Naive thymus-derived CD4-positive, alpha-beta T cell (primary cell): ENCODE measurements at regions of chr6 and their contacts with region 1.

Region 1: DNA sequence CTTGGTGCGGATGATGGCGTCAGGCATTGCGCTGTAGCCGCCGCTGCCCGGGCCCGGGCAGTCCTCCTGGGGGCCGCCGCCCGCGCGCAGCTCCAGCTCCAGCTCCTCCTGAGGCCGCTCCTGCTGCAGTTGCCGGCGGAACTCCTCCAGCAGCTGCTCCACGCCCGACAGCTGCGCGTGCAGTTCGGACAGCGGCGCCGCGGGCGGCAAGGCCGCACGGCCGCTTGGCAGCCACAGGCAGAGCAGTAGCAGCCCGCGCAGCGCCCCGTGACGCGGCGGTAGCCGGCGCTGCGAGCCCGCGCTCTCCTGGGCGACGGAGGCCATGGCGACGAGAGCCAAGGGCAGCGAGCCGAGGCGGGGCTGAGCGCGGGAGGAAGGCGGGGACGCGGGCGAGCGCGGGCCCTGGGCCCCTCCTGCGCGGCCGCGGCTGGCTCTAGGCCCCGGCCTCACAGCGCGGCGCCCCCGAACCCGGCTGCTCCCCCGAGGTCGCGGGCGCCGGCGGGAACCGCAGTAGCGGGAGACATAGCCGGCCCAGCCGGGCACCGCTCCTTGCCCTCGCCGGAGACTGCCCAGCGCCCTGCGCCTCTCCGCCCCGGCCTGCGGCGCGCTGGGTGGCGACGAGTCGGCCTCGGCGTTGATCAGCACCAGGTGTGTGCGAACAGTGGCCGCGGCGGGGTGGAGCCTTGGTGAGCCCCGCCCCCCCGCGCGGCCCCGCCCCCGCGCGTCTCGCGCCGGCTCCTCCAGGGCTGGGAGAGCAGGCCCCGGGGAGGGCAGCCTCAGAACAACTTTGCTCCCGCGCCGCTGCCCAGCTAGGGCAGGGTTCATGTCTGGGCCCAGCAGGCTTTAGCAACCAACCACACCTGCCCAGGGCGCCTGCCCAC is at the start of gene LRP11:
- DNase-seq: peak; percentile 73 to 90 (median 83)
- ATAC-seq: peak; percentile 93
- H3K4me3 ChIP-seq: peak within 1 kb of the TSS; percentile 63
- H3K4me3 Mint-ChIP-seq: peak within 1 kb of the TSS; percentile 80 to 88 (median 82)
- H3K27ac ChIP-seq: peak within 1 kb of the TSS; percentile 62
- H3K27ac Mint-ChIP-seq: peak within 1 kb of the TSS in 6 of 9 donors; percentile 24 to 82 (median 48)
- H3K4me1 ChIP-seq: peaks cover 6 to 10% of the 10 kb centered on the region in 2 donors
- H3K4me1 Mint-ChIP-seq: peaks cover 0 to 21% (median 10%) of the 10 kb centered on the region in 7 donors
- H3K27me3 ChIP-seq: no peaks in the 10 kb centered on the region
- H3K27me3 Mint-ChIP-seq: peaks cover 0 to 41% (median 8%) of the 10 kb centered on the region in 5 donors
- total RNA-seq, gene LRP11: 0.88 to 3.7 (median 2.8) TPM

Region 2: GRCh38 chr6:149648148-149649145 is 215.5 kb before region 1 on chr6 and contains the start of gene KATNA1:
- CTCF ChIA-PET with region 1: no interaction called
- POLR2A ChIA-PET with region 1: no interaction called
- intact Hi-C with region 1: loop called (anchors 5 to 10 kb)
- DNase-seq: peak; percentile 69 to 95 (median 81)
- ATAC-seq: peak; percentile 96
- H3K4me3 ChIP-seq: peak within 1 kb of the TSS; percentile 91
- H3K4me3 Mint-ChIP-seq: peak within 1 kb of the TSS; percentile 83 to 96 (median 91)
- H3K27ac ChIP-seq: peak within 1 kb of the TSS; percentile 82
- H3K27ac Mint-ChIP-seq: peak within 1 kb of the TSS; percentile 82 to 95 (median 90)
- H3K4me1 ChIP-seq: peaks cover 7 to 17% of the 10 kb centered on the region in 2 donors
- H3K4me1 Mint-ChIP-seq: peaks cover 2 to 41% (median 33%) of the 10 kb centered on the region in 7 donors
- H3K27me3 ChIP-seq: no peaks in the 10 kb centered on the region
- H3K27me3 Mint-ChIP-seq: no peaks in the 10 kb centered on the region
- total RNA-seq, gene KATNA1: 14.1 to 22.6 (median 16.7) TPM

Region 3: GRCh38 chr6:149746147-149746946 is 117.6 kb before region 1 on chr6 and contains the start of gene NUP43:
- CTCF ChIA-PET with region 1: no interaction called
- POLR2A ChIA-PET with region 1: no interaction called
- intact Hi-C with region 1: loop called (anchors 1 kb)
- DNase-seq: peak; percentile 75 to 91 (median 90)
- ATAC-seq: peak; percentile 80
- H3K4me3 ChIP-seq: peak within 1 kb of the TSS; percentile 77
- H3K4me3 Mint-ChIP-seq: peak within 1 kb of the TSS; percentile 93 to 99 (median 97)
- H3K27ac ChIP-seq: peak within 1 kb of the TSS; percentile 82
- H3K27ac Mint-ChIP-seq: peak within 1 kb of the TSS; percentile 86 to 97 (median 95)
- H3K4me1 ChIP-seq: peaks cover 17 to 26% of the 10 kb centered on the region in 2 donors
- H3K4me1 Mint-ChIP-seq: peaks cover 14 to 46% (median 32%) of the 10 kb centered on the region in 7 donors
- H3K27me3 ChIP-seq: no peaks in the 10 kb centered on the region
- H3K27me3 Mint-ChIP-seq: no peaks in the 10 kb centered on the region
- total RNA-seq, gene NUP43: 14.0 to 70.7 (median 60.2) TPM

Region 4: DNA sequence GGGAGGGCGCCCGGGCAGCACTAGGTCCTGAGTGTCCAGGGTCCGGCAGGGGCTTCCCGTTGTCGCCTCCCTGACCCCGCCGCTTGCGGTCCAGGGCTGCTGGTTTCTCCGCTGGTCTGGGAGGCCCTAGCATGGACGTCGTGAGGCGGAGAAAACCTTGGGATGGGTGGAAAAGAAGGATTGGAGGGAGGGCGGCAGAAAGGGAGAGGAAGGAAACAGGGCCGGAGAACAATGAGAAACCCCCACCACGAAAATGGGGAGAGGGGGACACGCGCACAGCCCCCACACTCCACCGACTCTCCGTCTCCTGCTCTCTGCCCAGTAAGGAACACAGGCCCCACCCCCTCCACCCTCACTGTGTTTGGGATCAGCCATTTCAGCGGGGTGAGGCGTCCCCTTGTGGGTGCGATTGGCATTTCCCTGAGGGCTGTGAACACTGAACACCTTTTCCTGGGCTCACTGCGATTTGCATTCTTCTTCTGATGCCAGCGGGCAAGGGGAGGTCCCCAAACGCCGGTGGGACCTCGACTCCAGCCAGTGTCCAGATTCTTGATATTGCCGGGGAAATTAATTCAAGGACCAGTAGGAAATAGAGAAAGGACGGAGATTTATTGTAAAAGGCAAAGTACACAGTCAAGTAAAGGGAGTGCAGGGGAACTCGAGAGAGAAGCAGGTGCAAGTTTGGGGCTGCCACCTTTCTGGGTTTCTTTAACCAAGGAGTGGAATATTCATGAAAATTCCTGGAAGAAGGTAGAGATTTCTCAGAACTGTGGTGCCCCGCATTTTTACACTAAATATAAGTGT is 62.2 kb after region 1 on chr6:
- CTCF ChIA-PET with region 1: no interaction called
- POLR2A ChIA-PET with region 1: no interaction called
- intact Hi-C with region 1: loop called (anchors 1 kb)
- DNase-seq: peak; percentile 35 to 77 (median 56)
- ATAC-seq: peak; percentile 76
- H3K4me3 ChIP-seq: no peak overlapping the region
- H3K4me3 Mint-ChIP-seq: peak overlapping the region in 9 of 10 donors; percentile 12 to 73 (median 40)
- H3K27ac ChIP-seq: no peak overlapping the region
- H3K27ac Mint-ChIP-seq: peak overlapping the region in 1 of 9 donors; percentile 10
- H3K4me1 ChIP-seq: peaks cover 6 to 7% of the 10 kb centered on the region in 2 donors
- H3K4me1 Mint-ChIP-seq: peaks cover 18 to 30% (median 26%) of the 10 kb centered on the region in 7 donors
- H3K27me3 ChIP-seq: peaks cover 21 to 32% of the 10 kb centered on the region in 2 donors
- H3K27me3 Mint-ChIP-seq: peaks cover 85 to 93% (median 87%) of the 10 kb centered on the region in 5 donors

Region 5: GRCh38 chr6:149963462-149964307 is 99.7 kb after region 1 on chr6 and contains the start of gene ULBP1:
- CTCF ChIA-PET with region 1: no interaction called
- POLR2A ChIA-PET with region 1: no interaction called
- intact Hi-C with region 1: no loop called
- DNase-seq: peak; percentile 48 to 86 (median 58)
- ATAC-seq: peak; percentile 79
- H3K4me3 ChIP-seq: peak within 1 kb of the TSS; percentile 66
- H3K4me3 Mint-ChIP-seq: peak within 1 kb of the TSS; percentile 88 to 97 (median 92)
- H3K27ac ChIP-seq: no peak within 1 kb of the TSS
- H3K27ac Mint-ChIP-seq: peak within 1 kb of the TSS in 8 of 9 donors; percentile 15 to 92 (median 74)
- H3K4me1 ChIP-seq: peaks cover 8 to 24% of the 10 kb centered on the region in 2 donors
- H3K4me1 Mint-ChIP-seq: peaks cover 14 to 28% (median 23%) of the 10 kb centered on the region in 7 donors
- H3K27me3 ChIP-seq: peaks cover 12 to 36% of the 10 kb centered on the region in 2 donors
- H3K27me3 Mint-ChIP-seq: peaks cover 72 to 90% (median 87%) of the 10 kb centered on the region in 5 donors
- total RNA-seq, gene ULBP1: 1.4 TPM in 1 of 5 experiments, not detected in the others

Region 6: DNA sequence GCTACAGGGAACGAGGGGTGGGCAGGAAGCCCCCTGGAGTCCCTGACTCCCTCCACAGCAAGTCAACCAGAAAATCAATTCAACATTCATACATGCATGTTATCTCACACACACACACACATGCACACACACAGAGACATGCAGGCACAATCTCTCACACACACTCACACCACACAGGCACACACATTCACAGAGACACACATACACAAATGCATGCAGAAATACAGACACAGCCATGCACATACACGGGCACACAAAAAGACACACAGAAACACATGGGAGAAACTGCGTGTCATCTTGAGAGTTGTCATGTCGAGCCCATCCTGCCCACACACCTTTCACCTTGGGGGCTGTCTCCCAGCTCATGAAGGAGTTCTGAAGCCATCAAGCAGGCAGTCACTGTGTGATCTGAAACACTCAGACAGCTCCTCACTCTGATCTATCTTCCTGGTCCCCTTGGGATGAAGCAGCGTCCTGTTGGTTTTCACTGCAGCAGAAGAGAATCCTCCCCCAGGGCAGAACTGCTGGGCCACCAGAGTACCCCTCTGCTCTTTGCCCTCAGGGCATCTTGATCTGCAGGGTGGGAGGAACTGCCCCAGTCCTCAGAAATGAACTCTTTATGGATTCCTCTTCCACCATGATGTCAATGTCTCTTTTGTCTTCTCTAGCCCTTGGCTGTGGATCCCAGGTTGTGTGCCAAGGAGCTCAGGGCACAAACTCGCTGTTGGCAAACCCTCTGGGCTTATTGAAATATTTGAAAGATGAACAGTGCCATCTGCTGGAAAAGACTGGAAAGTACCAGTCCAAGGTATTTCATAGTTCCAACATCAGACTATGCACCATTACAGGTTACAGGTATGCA is 152.6 kb after region 1 on chr6:
- CTCF ChIA-PET with region 1: no interaction called
- POLR2A ChIA-PET with region 1: no interaction called
- intact Hi-C with region 1: loop called in 1 of 2 experiments (anchors 1 kb)
- DNase-seq: peak in 8 of 9 donors; percentile 38 to 77 (median 68)
- ATAC-seq: peak; percentile 85
- H3K4me3 ChIP-seq: no peak overlapping the region
- H3K4me3 Mint-ChIP-seq: no peak overlapping the region
- H3K27ac ChIP-seq: no peak overlapping the region
- H3K27ac Mint-ChIP-seq: peak overlapping the region in 1 of 9 donors; percentile 1
- H3K4me1 ChIP-seq: peaks cover 0 to 2% of the 10 kb centered on the region in 2 donors
- H3K4me1 Mint-ChIP-seq: peaks cover 10 to 23% (median 15%) of the 10 kb centered on the region in 7 donors
- H3K27me3 ChIP-seq: peaks cover 11 to 16% of the 10 kb centered on the region in 2 donors
- H3K27me3 Mint-ChIP-seq: peaks cover 60 to 80% (median 66%) of the 10 kb centered on the region in 5 donors